ENCODE measurements at regions of chr14 and their contacts with region 1.

Region 1: GRCh38 chr14:71320107-71320733 is 413.0 kb downstream of the PCNX1 start:
- DNase-seq: peak; percentile 98
- ATAC-seq: peak; percentile 88
- H3K4me3 Mint-ChIP-seq: peak within 1 kb of the TSS; percentile 95
- H3K27ac Mint-ChIP-seq: peak within 1 kb of the TSS; percentile 93
- H3K4me1 Mint-ChIP-seq: peaks cover 42% of the 10 kb centered on the region
- H3K27me3 Mint-ChIP-seq: no peaks in the 10 kb centered on the region
- CTCF ChIP-seq: no peak

Region 2: DNA sequence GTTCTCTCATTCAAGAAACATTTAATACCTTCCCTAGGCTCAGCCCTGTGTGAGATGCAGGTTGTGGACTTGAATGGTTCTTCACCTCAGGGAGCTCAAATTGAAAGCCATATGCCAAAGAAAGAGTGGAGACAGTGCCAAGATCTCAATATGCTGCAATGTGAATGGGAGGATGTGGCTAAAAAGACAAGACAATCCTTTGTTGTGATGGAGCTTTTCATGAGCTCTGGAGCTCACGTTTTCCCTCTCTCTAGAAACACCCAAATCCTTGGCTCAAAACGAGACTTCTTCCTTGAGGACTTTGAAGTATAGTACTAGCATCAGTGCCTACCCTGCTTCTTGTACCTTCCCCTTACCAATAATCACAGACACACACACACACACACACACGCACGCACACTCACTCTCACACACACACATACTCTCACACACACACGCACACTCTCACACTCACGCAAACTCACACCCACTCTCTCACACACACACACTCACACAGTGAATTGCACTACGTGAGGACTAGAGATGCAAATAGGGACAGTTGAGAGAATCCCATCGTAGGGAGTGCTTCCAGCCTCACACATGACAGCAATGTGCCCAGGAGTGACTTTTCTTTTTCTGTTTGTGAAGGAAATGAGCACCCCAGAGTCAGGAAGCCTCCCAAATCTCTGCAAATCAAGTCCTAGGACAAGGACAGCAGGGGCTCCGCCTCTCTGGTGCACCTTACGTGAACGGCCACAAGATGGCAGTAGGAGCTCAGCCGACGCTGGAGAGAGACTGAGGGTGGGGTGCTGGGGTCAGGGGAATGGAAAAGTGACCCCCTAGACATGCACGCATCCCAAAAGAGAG is 181.5 kb before region 1 on chr14:
- CTCF ChIA-PET with region 1: interaction called, 5 read pairs
- POLR2A ChIA-PET with region 1: interaction called, 13 read pairs
- intact Hi-C with region 1: loop called (anchors 2 kb)
- DNase-seq: peak; percentile 68
- ATAC-seq: no peak
- H3K4me3 Mint-ChIP-seq: no peak overlapping the region
- H3K27ac Mint-ChIP-seq: no peak overlapping the region
- H3K4me1 Mint-ChIP-seq: peaks cover 23% of the 10 kb centered on the region
- H3K27me3 Mint-ChIP-seq: no peaks in the 10 kb centered on the region
- CTCF ChIP-seq: peak; percentile 97

Region 3: DNA sequence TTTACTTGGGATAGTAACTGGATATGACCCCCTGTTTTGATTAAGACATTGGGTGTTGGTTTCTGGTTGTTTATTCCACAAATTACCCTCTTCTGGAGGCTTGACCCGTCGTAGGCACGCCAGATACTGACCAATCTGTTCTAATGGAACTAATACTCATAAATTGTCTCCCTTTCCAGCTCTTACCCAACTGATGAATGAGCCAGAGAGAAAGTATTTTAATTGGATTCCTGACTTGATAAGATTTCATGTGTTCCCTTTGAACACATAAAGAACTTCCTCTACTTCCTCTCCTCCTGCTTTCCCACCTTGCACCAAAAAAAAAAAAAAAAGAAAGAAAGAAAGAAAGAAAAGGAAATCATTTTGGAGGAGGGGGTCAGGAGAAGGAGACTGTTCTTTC is 72.0 kb before region 1 on chr14:
- CTCF ChIA-PET with region 1: no interaction called
- POLR2A ChIA-PET with region 1: no interaction called
- intact Hi-C with region 1: no loop called
- DNase-seq: no peak
- ATAC-seq: no peak
- H3K4me3 Mint-ChIP-seq: no peak overlapping the region
- H3K27ac Mint-ChIP-seq: no peak overlapping the region
- H3K4me1 Mint-ChIP-seq: peaks cover 36% of the 10 kb centered on the region
- H3K27me3 Mint-ChIP-seq: no peaks in the 10 kb centered on the region
- CTCF ChIP-seq: no peak

Region 4: DNA sequence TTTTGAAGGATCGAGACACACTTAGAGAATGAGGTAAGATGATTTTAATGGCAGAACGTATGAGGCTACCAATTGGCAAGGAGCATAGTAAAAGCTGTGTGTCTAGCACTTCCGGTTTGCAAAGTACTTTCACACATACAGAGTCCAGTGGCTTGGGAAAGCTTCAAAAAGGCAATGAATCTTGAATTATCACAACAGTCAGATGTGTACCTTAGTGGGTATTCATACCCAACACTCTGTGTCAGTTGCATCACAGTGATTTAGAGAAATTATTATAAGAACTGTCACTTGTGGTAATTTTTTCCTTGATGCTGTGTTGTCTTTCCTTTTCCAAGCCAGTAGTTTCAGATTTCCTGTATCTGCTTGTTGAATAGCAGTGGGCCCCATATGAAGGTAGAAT is 11.2 kb after region 1 on chr14:
- CTCF ChIA-PET with region 1: interaction called, 3 read pairs
- POLR2A ChIA-PET with region 1: interaction called, 14 read pairs
- intact Hi-C with region 1: no loop called
- DNase-seq: no peak
- ATAC-seq: peak; percentile 34
- H3K4me3 Mint-ChIP-seq: no peak overlapping the region
- H3K27ac Mint-ChIP-seq: peak overlapping the region; percentile 58
- H3K4me1 Mint-ChIP-seq: peaks cover 68% of the 10 kb centered on the region
- H3K27me3 Mint-ChIP-seq: no peaks in the 10 kb centered on the region
- CTCF ChIP-seq: no peak

Region 5: DNA sequence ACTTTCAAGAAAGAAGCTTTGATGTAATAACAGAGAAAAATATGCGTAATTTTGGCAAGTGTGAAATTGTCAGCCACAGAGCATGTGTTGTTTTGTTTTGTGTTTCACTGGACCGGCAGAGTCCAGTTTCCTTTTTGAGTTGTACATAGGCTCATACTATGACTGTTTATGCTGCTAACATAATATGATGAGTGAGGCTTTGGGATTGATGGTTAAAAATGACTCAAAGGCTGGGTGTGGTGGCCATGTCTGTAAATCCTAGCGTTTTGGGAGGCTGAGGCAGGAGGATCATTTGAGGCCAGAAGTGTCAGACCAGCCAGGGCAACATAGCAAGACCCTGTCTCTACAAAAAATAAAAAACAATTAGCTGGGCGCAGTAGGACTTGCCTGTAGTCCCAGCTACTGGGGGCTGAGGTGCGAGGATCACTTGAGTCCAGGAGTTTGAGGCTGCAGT is 75.0 kb after region 1 on chr14:
- CTCF ChIA-PET with region 1: interaction called, 11 read pairs
- POLR2A ChIA-PET with region 1: interaction called, 3 read pairs
- intact Hi-C with region 1: no loop called
- DNase-seq: peak; percentile 41
- ATAC-seq: peak; percentile 45
- H3K4me3 Mint-ChIP-seq: no peak overlapping the region
- H3K27ac Mint-ChIP-seq: peak overlapping the region; percentile 19
- H3K4me1 Mint-ChIP-seq: peaks cover 43% of the 10 kb centered on the region
- H3K27me3 Mint-ChIP-seq: no peaks in the 10 kb centered on the region
- CTCF ChIP-seq: no peak

Region 6: GRCh38 chr14:71403656-71404055 is 83.4 kb after region 1 on chr14:
- CTCF ChIA-PET with region 1: interaction called, 6 read pairs
- POLR2A ChIA-PET with region 1: interaction called, 3 read pairs
- intact Hi-C with region 1: loop called (anchors 5 kb)
- DNase-seq: peak; percentile 58
- ATAC-seq: peak; percentile 72
- H3K4me3 Mint-ChIP-seq: no peak overlapping the region
- H3K27ac Mint-ChIP-seq: no peak overlapping the region
- H3K4me1 Mint-ChIP-seq: peaks cover 35% of the 10 kb centered on the region
- H3K27me3 Mint-ChIP-seq: no peaks in the 10 kb centered on the region
- CTCF ChIP-seq: peak; percentile 39

Region 7: GRCh38 chr14:71416392-71416791 is 96.2 kb after region 1 on chr14:
- CTCF ChIA-PET with region 1: no interaction called
- POLR2A ChIA-PET with region 1: no interaction called
- intact Hi-C with region 1: no loop called
- DNase-seq: no peak
- ATAC-seq: no peak
- H3K4me3 Mint-ChIP-seq: no peak overlapping the region
- H3K27ac Mint-ChIP-seq: no peak overlapping the region
- H3K4me1 Mint-ChIP-seq: peaks cover 18% of the 10 kb centered on the region
- H3K27me3 Mint-ChIP-seq: no peaks in the 10 kb centered on the region
- CTCF ChIP-seq: no peak

Region 8: GRCh38 chr14:71478542-71478941 is 158.3 kb after region 1 on chr14:
- CTCF ChIA-PET with region 1: no interaction called
- POLR2A ChIA-PET with region 1: interaction called, 4 read pairs
- intact Hi-C with region 1: loop called (anchors 10 kb)
- DNase-seq: peak; percentile 42
- ATAC-seq: peak; percentile 54
- H3K4me3 Mint-ChIP-seq: no peak overlapping the region
- H3K27ac Mint-ChIP-seq: peak overlapping the region; percentile 63
- H3K4me1 Mint-ChIP-seq: peaks cover 53% of the 10 kb centered on the region
- H3K27me3 Mint-ChIP-seq: no peaks in the 10 kb centered on the region
- CTCF ChIP-seq: no peak

Region 9: DNA sequence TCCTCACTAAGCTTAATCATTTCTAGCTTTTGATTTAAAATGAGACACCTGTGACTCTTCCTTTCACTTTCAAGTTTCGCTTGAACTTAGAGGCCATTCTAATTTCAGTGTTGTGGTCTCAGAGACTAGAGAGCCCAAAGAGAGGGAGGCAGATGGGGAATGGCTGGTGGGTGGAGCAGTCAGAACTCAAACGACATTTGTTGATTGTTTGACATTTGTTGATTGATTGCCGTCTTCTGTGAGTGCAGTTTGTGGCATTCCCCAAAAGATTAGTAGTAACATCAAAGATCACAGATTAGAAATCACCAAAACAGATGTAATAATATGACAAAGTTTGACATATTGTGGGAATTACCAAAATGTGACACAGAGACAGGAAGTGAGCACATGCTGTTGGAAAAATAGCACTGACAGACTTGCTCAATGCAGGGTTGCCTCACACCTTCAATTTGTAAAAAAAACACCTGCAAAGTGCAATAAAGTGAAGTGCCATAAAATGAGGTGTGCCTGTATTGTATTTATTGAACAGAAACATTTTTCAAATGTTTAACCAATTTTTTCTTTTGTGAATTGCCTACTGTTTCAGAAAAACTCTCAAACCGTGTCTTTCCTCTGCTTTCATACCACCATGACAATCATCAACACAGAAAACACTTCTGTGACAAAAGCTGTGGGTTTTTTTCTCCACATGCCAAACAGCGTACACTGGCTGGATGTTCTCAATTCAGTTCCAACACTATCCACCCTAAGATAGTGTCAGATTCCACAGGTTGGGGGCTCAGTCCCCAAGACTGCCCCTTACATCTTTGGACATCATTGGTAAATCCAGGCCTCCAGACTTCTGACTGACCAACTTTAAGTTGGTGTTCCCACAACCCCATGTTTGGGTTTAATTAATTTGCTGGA is 235.7 kb after region 1 on chr14:
- CTCF ChIA-PET with region 1: interaction called, 3 read pairs
- POLR2A ChIA-PET with region 1: interaction called, 7 read pairs
- intact Hi-C with region 1: loop called (anchors 5 kb)
- DNase-seq: peak; percentile 87
- ATAC-seq: peak; percentile 88
- H3K4me3 Mint-ChIP-seq: peak overlapping the region; percentile 66
- H3K27ac Mint-ChIP-seq: peak overlapping the region; percentile 99
- H3K4me1 Mint-ChIP-seq: peaks cover 76% of the 10 kb centered on the region
- H3K27me3 Mint-ChIP-seq: no peaks in the 10 kb centered on the region
- CTCF ChIP-seq: no peak

Measured in activated CD8-positive, alpha-beta T cell treated with anti-CD3 and anti-CD28 coated beads for 36 hours (primary cell).